KBM-7 (cell line): ENCODE measurements at regions of chr2 and their contacts with region 1.

Region 1: GRCh38 chr2:133886735-133887660 is 318.7 kb upstream of the NCKAP5 start:
- DNase-seq: peak; percentile 72

Region 2: GRCh38 chr2:133576714-133577113 is 310.3 kb before region 1 on chr2:
- in situ Hi-C with region 1: no loop called
- DNase-seq: no peak

Region 3: GRCh38 chr2:134245340-134245984 is 358.5 kb after region 1 on chr2:
- in situ Hi-C with region 1: loop called (anchors 25 kb)
- DNase-seq: peak; percentile 96

Region 4: DNA sequence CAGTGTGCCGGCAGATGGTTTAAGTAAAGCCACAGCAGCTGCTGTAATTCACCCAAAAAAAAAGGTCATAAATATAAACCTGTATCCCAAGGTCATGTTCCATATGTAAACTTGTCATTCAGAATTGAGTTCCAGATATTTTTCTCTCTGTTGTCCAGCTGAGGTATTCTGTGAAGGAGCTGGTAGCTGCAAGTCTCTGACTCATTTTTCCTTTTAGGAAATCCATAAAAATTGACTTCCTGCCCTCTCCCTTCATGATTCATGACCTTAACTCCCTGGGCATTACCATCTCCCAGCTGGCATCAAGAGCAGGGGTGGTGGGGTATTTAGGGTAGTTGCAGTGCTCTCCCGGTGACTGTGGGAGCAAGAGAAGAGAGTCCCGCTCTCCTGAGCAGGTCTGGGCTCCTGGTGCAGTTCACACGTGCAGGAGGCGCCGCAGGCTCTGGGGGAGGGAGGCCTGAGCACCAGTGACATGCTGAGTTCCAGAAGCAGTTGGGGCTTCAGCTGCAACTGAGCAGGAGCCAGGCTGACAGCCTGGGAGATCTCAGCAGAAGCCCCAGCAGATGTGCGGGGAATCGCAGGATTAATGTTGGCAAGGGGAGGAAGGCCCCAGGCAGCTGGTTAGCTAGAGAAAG is 559.5 kb after region 1 on chr2:
- in situ Hi-C with region 1: loop called (anchors 25 kb)
- DNase-seq: no peak

Region 5: GRCh38 chr2:134460583-134460998 is 573.6 kb after region 1 on chr2:
- in situ Hi-C with region 1: no loop called
- DNase-seq: peak; percentile 63